Sciatic nerve (tissue), 2 donors: ENCODE measurements at regions of chr5 and their contacts with region 1.

Region 1: GRCh38 chr5:61805101-61805500 is 473.0 kb downstream of the ZSWIM6 start:
- DNase-seq: no peak
- ATAC-seq: no peak

Region 2: DNA sequence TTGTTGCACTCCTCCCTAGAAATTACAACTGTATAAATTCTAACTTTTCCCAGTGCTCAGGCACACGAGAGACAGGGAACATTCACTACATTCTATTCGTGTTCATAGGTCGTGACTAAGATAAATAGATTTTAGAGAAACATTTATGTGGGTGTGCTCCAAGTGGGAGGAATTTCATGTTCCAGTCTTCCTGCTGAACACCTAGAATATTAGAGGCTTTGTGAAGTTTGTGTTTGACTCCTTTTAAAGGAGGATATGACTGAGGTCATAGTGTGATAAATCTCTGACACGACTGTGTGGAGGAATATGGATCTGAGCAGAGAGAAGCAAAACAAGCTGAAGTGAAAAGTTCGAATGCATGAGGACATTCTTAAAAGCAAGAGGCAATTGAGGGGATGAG is 117.7 kb before region 1 on chr5:
- intact Hi-C with region 1: loop called (anchors 10 kb)
- DNase-seq: no peak
- ATAC-seq: no peak